PC-9 (cell line): ENCODE measurements at regions of chr1 and their contacts with region 1.

Region 1: DNA sequence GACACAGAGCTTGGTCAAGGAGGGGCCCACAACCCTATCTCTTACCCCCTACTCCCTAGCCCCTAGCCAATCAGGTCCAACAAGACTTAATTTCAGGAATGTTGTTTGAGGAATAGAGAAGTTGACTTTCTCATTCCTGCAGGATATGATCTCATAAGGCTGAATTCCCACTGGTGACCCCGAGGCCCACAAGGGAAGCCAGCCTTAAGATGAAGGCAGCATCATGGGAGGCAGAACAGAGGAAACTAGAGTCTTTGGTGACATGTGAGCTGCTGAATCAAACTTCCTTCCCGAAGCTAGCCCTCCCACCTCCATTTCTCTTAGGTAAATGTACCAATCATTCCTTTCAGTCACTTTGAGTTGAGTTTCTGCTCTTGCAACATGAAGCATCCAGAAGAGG is 9.1 kb upstream of the PDIK1L start:
- DNase-seq: no peak
- H3K4me3 ChIP-seq: no peak overlapping the region
- H3K27ac ChIP-seq: no peak overlapping the region
- H3K4me1 ChIP-seq: peaks cover 11% of the 10 kb centered on the region
- H3K27me3 ChIP-seq: no peaks in the 10 kb centered on the region
- CTCF ChIP-seq: no peak

Region 2: GRCh38 chr1:26145041-26145959 is 42.8 kb after region 1 on chr1:
- CTCF ChIA-PET with region 1: interaction called, 8 read pairs
- POLR2A ChIA-PET with region 1: interaction called, 4 read pairs
- intact Hi-C with region 1: loop called (anchors 1 kb)
- DNase-seq: peak; percentile 70 to 71
- H3K4me3 ChIP-seq: no peak overlapping the region
- H3K27ac ChIP-seq: no peak overlapping the region
- H3K4me1 ChIP-seq: no peaks in the 10 kb centered on the region
- H3K27me3 ChIP-seq: no peaks in the 10 kb centered on the region
- CTCF ChIP-seq: peak; percentile 82

Region 3: GRCh38 chr1:26321315-26322041 is 219.0 kb after region 1 on chr1:
- CTCF ChIA-PET with region 1: no interaction called
- POLR2A ChIA-PET with region 1: no interaction called
- intact Hi-C with region 1: loop called (anchors 1 kb)
- DNase-seq: peak; percentile 42 to 86
- H3K4me3 ChIP-seq: no peak overlapping the region
- H3K27ac ChIP-seq: no peak overlapping the region
- H3K4me1 ChIP-seq: no peaks in the 10 kb centered on the region
- H3K27me3 ChIP-seq: no peaks in the 10 kb centered on the region
- CTCF ChIP-seq: peak; percentile 80

Region 4: GRCh38 chr1:26391450-26391849 is 288.9 kb after region 1 on chr1:
- CTCF ChIA-PET with region 1: interaction called, 3 read pairs
- POLR2A ChIA-PET with region 1: no interaction called
- intact Hi-C with region 1: loop called (anchors 1 kb)
- DNase-seq: peak; percentile 43 to 46
- H3K4me3 ChIP-seq: no peak overlapping the region
- H3K27ac ChIP-seq: no peak overlapping the region
- H3K4me1 ChIP-seq: peaks cover 5% of the 10 kb centered on the region; the same call in 1 of the 2 replicates
- H3K27me3 ChIP-seq: no peaks in the 10 kb centered on the region
- CTCF ChIP-seq: peak; percentile 78